Heart right ventricle (tissue), 16 donors: ENCODE measurements at regions of chr4 and their contacts with region 1.

Region 1: DNA sequence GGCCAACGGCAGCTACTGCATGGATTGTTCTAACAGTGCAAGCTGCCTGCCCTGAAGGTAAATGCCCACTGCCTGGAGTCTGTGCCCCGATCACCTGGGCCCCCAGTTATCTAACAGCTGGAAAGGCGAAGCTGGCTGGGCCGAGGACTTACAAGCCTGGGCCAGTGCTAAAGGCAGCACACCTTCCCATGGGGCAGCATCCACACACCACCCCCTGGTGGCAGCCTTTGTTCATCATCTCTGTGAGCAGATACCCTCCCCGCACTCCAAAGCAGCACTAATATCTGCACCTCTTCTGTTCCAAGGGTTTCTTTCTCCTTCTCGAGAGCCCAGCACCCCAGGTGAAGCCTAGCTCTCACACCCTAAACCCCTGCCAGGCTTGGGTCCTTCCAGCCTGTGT is 7.6 kb downstream of the SLC2A9 start:
- DNase-seq: peak; percentile 37 to 47
- ATAC-seq: peak in 6 of 8 donors; percentile 43 to 75 (median 60)
- H3K4me3 ChIP-seq: no peak overlapping the region
- H3K27ac ChIP-seq: no peak overlapping the region
- H3K4me1 ChIP-seq: peaks cover 0 to 27% (median 12%) of the 10 kb centered on the region in 9 donors
- H3K27me3 ChIP-seq: no peaks in the 10 kb centered on the region
- CTCF ChIP-seq: peak; percentile 23 to 55 (median 48)

Region 2: GRCh38 chr4:9735515-9735914 is 278.2 kb before region 1 on chr4:
- intact Hi-C with region 1: no loop called
- DNase-seq: no peak
- ATAC-seq: no peak
- H3K4me3 ChIP-seq: no peak overlapping the region
- H3K27ac ChIP-seq: no peak overlapping the region
- H3K4me1 ChIP-seq: peaks cover 0 to 5% (median 0%) of the 10 kb centered on the region in 9 donors
- H3K27me3 ChIP-seq: no peaks in the 10 kb centered on the region
- CTCF ChIP-seq: no peak

Region 3: GRCh38 chr4:9904976-9905587 is 108.6 kb before region 1 on chr4:
- intact Hi-C with region 1: loop called in 4 of 10 experiments (anchors 5 to 10 kb)
- DNase-seq: peak; percentile 22 to 44
- ATAC-seq: peak in 5 of 8 donors; percentile 24 to 69 (median 51)
- H3K4me3 ChIP-seq: no peak overlapping the region
- H3K27ac ChIP-seq: no peak overlapping the region
- H3K4me1 ChIP-seq: peaks cover 0 to 10% (median 4%) of the 10 kb centered on the region in 9 donors
- H3K27me3 ChIP-seq: no peaks in the 10 kb centered on the region
- CTCF ChIP-seq: no peak

Region 4: GRCh38 chr4:9924750-9925149 is 89.0 kb before region 1 on chr4:
- intact Hi-C with region 1: loop called in 4 of 10 experiments (anchors 5 to 10 kb)
- DNase-seq: no peak
- ATAC-seq: peak in 3 of 8 donors; percentile 20 to 65 (median 34)
- H3K4me3 ChIP-seq: no peak overlapping the region
- H3K27ac ChIP-seq: no peak overlapping the region
- H3K4me1 ChIP-seq: peaks cover 0 to 10% (median 0%) of the 10 kb centered on the region in 9 donors
- H3K27me3 ChIP-seq: no peaks in the 10 kb centered on the region
- CTCF ChIP-seq: no peak

Region 5: GRCh38 chr4:10054571-10055041 is 40.9 kb after region 1 on chr4:
- intact Hi-C with region 1: no loop called
- DNase-seq: no peak
- ATAC-seq: peak; percentile 50 to 84 (median 73)
- H3K4me3 ChIP-seq: no peak overlapping the region
- H3K27ac ChIP-seq: peak overlapping the region; percentile 13 to 86 (median 46)
- H3K4me1 ChIP-seq: peaks cover 0 to 44% (median 12%) of the 10 kb centered on the region in 9 donors
- H3K27me3 ChIP-seq: no peaks in the 10 kb centered on the region
- CTCF ChIP-seq: no peak